Mammary epithelial cell (primary cell): ENCODE measurements at regions of chr1 and their contacts with region 1.

Region 1: GRCh38 chr1:234373064-234373958 is at the start of gene COA6:
- DNase-seq: peak; percentile 96
- H3K4me3 ChIP-seq: peak within 1 kb of the TSS; percentile 74 to 93 (median 91)
- H3K27ac ChIP-seq: peak within 1 kb of the TSS; percentile 88
- H3K4me1 ChIP-seq: peaks cover 14% of the 10 kb centered on the region
- H3K27me3 ChIP-seq: no peaks in the 10 kb centered on the region
- CTCF ChIP-seq: no peak
- total RNA-seq, gene COA6: 10.3 to 43.4 TPM

Region 2: GRCh38 chr1:234154320-234155251 is 218.7 kb before region 1 on chr1:
- CTCF ChIA-PET with region 1: no interaction called
- dilution Hi-C with region 1: no loop called
- in situ Hi-C with region 1: no loop called
- intact Hi-C with region 1: loop called (anchors 2 kb)
- DNase-seq: peak; percentile 73
- H3K4me3 ChIP-seq: no peak overlapping the region
- H3K27ac ChIP-seq: no peak overlapping the region
- H3K4me1 ChIP-seq: peaks cover 3% of the 10 kb centered on the region
- H3K27me3 ChIP-seq: no peaks in the 10 kb centered on the region
- CTCF ChIP-seq: peak; percentile 73 to 80

Region 3: DNA sequence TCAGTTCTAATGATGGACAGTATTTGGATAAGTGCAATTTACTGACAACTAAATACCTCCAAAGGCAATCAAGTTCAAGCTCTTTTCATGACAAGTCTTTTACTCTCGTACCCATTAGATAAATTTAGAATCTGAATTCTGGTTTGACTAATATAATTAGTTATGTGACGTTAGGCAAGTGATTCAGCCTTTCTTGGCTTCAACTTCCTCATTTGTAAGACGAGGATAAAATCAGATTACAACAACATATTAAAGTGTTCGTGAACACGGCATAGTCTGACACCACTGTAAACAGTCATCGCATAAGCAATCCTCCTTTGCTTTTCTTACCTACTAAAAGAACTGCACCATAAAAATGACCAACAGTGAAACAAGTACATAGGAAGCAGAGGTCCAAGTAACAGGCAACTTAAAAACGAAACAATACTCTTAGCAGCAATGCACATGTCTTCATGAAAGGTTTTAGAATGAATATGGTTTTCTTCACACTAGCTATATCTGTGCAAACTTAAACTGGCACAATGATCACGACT is 25.6 kb after region 1 on chr1:
- CTCF ChIA-PET with region 1: no interaction called
- dilution Hi-C with region 1: no loop called
- in situ Hi-C with region 1: no loop called
- intact Hi-C with region 1: no loop called
- DNase-seq: peak; percentile 16
- H3K4me3 ChIP-seq: no peak overlapping the region
- H3K27ac ChIP-seq: no peak overlapping the region
- H3K4me1 ChIP-seq: no peaks in the 10 kb centered on the region
- H3K27me3 ChIP-seq: no peaks in the 10 kb centered on the region
- CTCF ChIP-seq: no peak

Region 4: GRCh38 chr1:234413990-234414389 is 40.7 kb after region 1 on chr1:
- CTCF ChIA-PET with region 1: no interaction called
- dilution Hi-C with region 1: loop called (anchors 5 kb)
- in situ Hi-C with region 1: no loop called
- intact Hi-C with region 1: no loop called
- DNase-seq: no peak
- H3K4me3 ChIP-seq: no peak overlapping the region
- H3K27ac ChIP-seq: no peak overlapping the region
- H3K4me1 ChIP-seq: no peaks in the 10 kb centered on the region
- H3K27me3 ChIP-seq: no peaks in the 10 kb centered on the region
- CTCF ChIP-seq: no peak

Region 5: GRCh38 chr1:234478481-234479309 is 105.4 kb after region 1 on chr1 and contains the start of gene TARBP1:
- CTCF ChIA-PET with region 1: no interaction called
- dilution Hi-C with region 1: no loop called
- in situ Hi-C with region 1: no loop called
- intact Hi-C with region 1: loop called (anchors 1 kb)
- DNase-seq: peak; percentile 73
- H3K4me3 ChIP-seq: peak within 1 kb of the TSS; percentile 73 to 82 (median 78)
- H3K27ac ChIP-seq: no peak within 1 kb of the TSS
- H3K4me1 ChIP-seq: peaks cover 11% of the 10 kb centered on the region
- H3K27me3 ChIP-seq: no peaks in the 10 kb centered on the region
- CTCF ChIP-seq: peak in 1 of 2 donors; percentile 16
- total RNA-seq, gene TARBP1: 16.1 to 18.0 TPM